Posterior cingulate gyrus (tissue), 11 donors: ENCODE measurements at regions of chr14 and their contacts with region 1.

Region 1: DNA sequence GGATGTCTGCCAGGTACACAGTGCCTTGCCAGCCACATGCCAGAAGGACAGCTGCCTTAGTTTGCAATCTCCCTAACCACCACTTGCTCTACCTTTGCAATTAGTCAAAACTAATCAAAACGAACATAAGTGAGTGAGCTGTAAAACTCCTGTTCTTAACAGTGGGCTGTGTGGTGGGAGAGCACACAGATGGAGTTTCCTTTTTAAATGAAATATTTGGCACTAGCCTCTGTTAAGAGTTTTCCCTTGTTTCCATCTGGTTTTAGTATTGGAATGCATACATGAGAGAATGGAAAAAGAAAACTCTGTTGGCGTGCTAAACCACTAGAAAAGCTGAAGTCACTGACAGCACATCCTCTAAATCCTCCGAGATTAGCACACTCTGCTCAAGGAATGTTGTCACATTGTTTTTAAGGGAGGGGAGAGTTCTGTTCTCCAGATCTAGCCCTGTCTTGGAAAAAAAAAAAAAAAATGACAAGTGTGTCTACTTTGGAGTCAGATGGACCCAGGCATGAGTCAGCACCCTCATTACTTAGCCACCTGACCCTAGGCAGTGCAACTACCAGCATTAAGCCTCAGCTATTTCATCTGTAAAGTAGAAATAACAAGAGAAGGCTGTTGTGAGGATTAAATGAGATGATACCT is 83.9 kb downstream of the STXBP6 start:
- DNase-seq: peak in 6 of 10 donors; percentile 19 to 89 (median 60)

Region 2: GRCh38 chr14:25049568-25050268 is 83.7 kb after region 1 on chr14 and contains the start of gene STXBP6:
- intact Hi-C with region 1: loop called (anchors 10 kb)
- DNase-seq: peak; percentile 75 to 98 (median 80)